ENCODE measurements at regions of chr9 and their contacts with region 1.

Region 1: DNA sequence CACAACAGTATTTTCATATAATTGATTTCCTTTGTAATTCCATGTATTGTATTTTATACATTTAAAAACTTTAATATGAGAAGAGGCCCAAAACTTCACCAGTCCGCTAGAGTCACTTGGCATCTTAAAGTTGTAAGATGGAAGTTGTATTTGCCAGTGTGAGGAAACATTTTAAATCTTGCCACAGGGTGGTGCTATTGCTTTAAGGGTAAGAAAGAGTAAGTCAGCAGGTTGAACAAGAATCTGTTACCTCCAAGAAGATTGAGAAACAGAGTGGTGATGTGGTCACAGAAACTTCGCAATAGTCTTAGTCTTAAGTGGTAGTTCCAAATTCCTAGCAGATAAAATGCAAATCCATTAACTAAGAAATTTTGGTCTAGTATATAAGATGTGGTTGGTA is 39.8 kb upstream of the RANBP6 start:
- DNase-seq: no peak
- ATAC-seq: peak; percentile 84

Region 2: GRCh38 chr9:5886114-5886939 is 168.9 kb before region 1 on chr9:
- intact Hi-C with region 1: loop called (anchors 2 kb)
- DNase-seq: peak; percentile 82
- ATAC-seq: peak; percentile 87